ENCODE measurements at regions of chr19 and their contacts with region 1.

Region 1: GRCh38 chr19:50239921-50240590 is 36.6 kb downstream of the MYH14 start:
- DNase-seq: no peak
- ATAC-seq: no peak
- H3K4me3 Mint-ChIP-seq: no peak overlapping the region
- H3K27ac Mint-ChIP-seq: peak overlapping the region; percentile 49
- H3K4me1 Mint-ChIP-seq: peaks cover 22% of the 10 kb centered on the region
- H3K27me3 Mint-ChIP-seq: no peaks in the 10 kb centered on the region
- CTCF ChIP-seq: no peak

Region 2: GRCh38 chr19:50203281-50204080 is 36.6 kb before region 1 on chr19 and contains the start of gene MYH14:
- CTCF ChIA-PET with region 1: interaction called, 12 read pairs
- POLR2A ChIA-PET with region 1: no interaction called
- DNase-seq: peak; percentile 96
- ATAC-seq: peak; percentile 71
- H3K4me3 Mint-ChIP-seq: peak within 1 kb of the TSS; percentile 65
- H3K27ac Mint-ChIP-seq: no peak within 1 kb of the TSS
- H3K4me1 Mint-ChIP-seq: peaks cover 13% of the 10 kb centered on the region
- H3K27me3 Mint-ChIP-seq: peaks cover 46% of the 10 kb centered on the region
- CTCF ChIP-seq: no peak
- total RNA-seq, gene MYH14: 25.8 to 33.5 TPM (median 31.2 TPM) in 3 replicates

Region 3: DNA sequence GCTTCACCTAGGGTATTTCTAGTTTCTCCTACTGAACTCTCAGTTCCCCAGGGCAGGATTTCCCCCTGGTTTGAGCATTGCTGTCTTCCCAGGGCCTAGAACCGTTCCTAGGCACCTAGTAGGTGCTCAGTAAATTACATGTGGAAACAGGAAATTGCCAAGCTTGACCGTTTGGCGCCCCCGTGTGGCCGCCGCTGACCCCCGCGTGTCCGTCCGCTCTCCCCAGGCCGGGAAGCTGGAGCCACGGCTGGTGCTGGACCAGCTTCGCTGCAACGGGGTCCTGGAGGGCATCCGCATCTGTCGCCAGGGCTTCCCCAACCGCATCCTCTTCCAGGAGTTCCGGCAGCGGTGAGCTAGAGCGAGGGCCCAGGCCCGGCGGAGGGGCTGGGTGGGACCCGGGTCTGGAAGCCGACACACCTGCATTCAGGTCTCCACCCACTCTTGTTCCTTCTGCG is 18.9 kb after region 1 on chr19:
- CTCF ChIA-PET with region 1: interaction called, 53 read pairs
- POLR2A ChIA-PET with region 1: no interaction called
- DNase-seq: peak; percentile 84
- ATAC-seq: peak; percentile 89
- H3K4me3 Mint-ChIP-seq: no peak overlapping the region
- H3K27ac Mint-ChIP-seq: no peak overlapping the region
- H3K4me1 Mint-ChIP-seq: no peaks in the 10 kb centered on the region
- H3K27me3 Mint-ChIP-seq: peaks cover 4% of the 10 kb centered on the region; the same call in 1 of the 2 replicates
- CTCF ChIP-seq: peak; percentile 89

Region 4: DNA sequence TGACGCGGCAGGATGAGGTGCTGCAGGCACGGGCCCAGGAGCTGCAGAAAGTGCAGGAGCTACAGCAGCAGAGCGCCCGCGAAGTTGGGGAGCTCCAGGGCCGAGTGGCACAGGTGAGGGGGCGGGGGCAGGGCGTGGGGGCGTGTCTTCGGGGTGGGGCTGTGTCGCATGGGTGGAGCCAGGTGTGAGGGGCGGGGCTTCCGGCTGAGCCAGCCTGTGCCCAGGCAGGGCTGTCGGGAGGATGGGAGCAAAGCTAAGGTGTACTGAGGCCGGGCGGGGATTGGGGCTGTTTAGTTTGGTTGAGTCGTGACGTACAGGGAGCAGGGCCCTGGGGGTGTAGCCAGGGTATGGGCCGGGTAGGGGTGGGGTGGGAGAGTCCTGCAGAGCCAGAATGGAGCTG is 26.8 kb after region 1 on chr19:
- CTCF ChIA-PET with region 1: interaction called, 11 read pairs
- POLR2A ChIA-PET with region 1: no interaction called
- DNase-seq: peak; percentile 96
- ATAC-seq: peak; percentile 99
- H3K4me3 Mint-ChIP-seq: peak overlapping the region; percentile 32
- H3K27ac Mint-ChIP-seq: no peak overlapping the region
- H3K4me1 Mint-ChIP-seq: peaks cover 8% of the 10 kb centered on the region
- H3K27me3 Mint-ChIP-seq: no peaks in the 10 kb centered on the region
- CTCF ChIP-seq: no peak

Region 5: DNA sequence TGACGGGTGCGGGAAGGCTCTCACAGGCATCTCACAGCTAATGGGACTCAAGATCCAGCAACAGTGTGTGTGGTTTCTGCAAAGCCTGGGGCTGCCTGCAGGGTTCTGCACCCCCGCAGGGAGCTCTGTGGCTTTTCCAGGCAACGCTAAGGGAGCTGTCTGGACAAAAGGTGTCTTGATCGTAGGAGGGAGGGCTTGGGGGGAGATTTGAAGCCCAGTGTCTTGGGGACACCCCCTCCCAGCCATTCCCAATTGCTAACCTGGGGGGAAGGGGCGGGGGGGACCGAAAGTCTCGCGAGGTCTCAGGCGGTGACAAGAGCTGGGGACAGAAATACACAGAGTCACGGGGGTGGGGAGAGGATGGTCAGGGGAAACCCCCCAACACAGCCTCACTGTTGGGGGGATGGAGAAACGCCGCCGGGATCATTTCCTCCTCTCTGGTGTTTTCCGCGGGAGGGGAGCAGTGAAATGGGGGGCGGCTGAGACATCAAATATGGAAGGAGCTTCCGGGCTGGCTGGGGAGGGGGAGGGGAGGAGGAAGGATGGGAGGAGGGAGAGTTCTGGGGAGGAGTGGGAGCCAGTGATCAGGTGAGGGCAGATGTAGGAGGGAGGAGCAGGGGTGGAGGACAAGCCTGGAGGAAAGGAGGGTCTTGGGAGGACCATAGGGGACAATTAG is 75.9 kb after region 1 on chr19:
- CTCF ChIA-PET with region 1: interaction called, 10 read pairs
- POLR2A ChIA-PET with region 1: no interaction called
- DNase-seq: peak; percentile 75
- ATAC-seq: peak; percentile 24
- H3K4me3 Mint-ChIP-seq: peak overlapping the region; percentile 82
- H3K27ac Mint-ChIP-seq: peak overlapping the region; percentile 98
- H3K4me1 Mint-ChIP-seq: peaks cover 30% of the 10 kb centered on the region
- H3K27me3 Mint-ChIP-seq: peaks cover 6% of the 10 kb centered on the region
- CTCF ChIP-seq: no peak

Measured in WTC11 (cell line).